ENCODE measurements at regions of chr16 and their contacts with region 1.

Region 1: GRCh38 chr16:69166221-69166833 is 20.6 kb upstream of the SNTB2 start:
- DNase-seq: no peak
- ATAC-seq: peak; percentile 38; the same call in 2 of the 3 replicates
- H3K4me3 ChIP-seq: no peak overlapping the region
- H3K27ac ChIP-seq: no peak overlapping the region
- H3K4me1 ChIP-seq: peaks cover 5% of the 10 kb centered on the region
- H3K27me3 ChIP-seq: no peaks in the 10 kb centered on the region
- CTCF ChIP-seq: no peak
- EP300 ChIP-seq: no peak
- POLR2A ChIP-seq: no peak
- RAD21 ChIP-seq: no peak

Region 2: DNA sequence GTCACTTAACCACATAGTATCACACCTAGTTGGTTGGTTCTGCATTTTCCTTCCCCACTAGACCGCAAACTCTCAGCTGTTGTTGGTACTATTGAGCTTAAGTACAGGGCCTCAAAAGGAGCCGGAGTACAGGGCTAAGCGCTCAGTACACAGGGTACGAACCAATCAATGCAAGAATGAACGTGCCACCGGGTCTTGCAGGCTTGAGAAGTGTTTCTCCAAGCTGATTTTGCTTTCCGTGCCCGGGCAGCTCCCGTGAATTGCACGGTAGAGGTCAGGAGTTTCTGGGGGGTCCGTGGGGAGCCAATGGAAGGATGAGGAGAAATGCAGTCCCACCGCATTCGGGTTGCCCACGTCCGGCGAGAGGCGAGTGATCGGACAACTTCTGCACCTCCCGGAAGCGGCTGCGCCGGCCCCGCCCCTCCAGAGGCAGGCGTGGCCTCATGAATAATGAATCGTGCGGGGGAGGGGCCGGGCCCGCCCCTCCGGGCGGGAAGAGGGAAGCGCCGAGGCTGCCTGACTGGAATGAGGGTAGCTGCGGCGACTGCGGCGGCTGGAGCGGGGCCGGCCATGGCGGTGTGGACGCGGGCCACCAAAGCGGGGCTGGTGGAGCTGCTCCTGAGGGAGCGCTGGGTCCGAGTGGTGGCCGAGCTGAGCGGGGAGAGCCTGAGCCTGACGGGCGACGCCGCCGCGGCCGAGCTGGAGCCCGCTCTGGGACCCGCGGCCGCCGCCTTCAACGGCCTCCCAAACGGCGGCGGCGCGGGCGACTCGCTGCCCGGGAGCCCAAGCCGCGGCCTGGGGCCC is 20.5 kb after region 1 on chr16 and contains the start of gene SNTB2:
- CTCF ChIA-PET with region 1: interaction called, 4 read pairs
- POLR2A ChIA-PET with region 1: interaction called, 13 read pairs
- RAD21 ChIA-PET with region 1: interaction called, 4 read pairs
- SMC1A ChIA-PET with region 1: interaction called, 8 read pairs
- in situ Hi-C with region 1: no loop called
- intact Hi-C with region 1: no loop called
- DNase-seq: peak; percentile 95
- ATAC-seq: peak; percentile 92
- H3K4me3 ChIP-seq: peak within 1 kb of the TSS; percentile 88
- H3K27ac ChIP-seq: peak within 1 kb of the TSS; percentile 90
- H3K4me1 ChIP-seq: peaks cover 22% of the 10 kb centered on the region
- H3K27me3 ChIP-seq: no peaks in the 10 kb centered on the region
- CTCF ChIP-seq: no peak
- EP300 ChIP-seq: peak; percentile 89 to 96
- POLR2A ChIP-seq: peak; percentile 77
- RAD21 ChIP-seq: no peak
- polyA plus RNA-seq, gene SNTB2: 1.2 to 1.4 TPM

Region 3: DNA sequence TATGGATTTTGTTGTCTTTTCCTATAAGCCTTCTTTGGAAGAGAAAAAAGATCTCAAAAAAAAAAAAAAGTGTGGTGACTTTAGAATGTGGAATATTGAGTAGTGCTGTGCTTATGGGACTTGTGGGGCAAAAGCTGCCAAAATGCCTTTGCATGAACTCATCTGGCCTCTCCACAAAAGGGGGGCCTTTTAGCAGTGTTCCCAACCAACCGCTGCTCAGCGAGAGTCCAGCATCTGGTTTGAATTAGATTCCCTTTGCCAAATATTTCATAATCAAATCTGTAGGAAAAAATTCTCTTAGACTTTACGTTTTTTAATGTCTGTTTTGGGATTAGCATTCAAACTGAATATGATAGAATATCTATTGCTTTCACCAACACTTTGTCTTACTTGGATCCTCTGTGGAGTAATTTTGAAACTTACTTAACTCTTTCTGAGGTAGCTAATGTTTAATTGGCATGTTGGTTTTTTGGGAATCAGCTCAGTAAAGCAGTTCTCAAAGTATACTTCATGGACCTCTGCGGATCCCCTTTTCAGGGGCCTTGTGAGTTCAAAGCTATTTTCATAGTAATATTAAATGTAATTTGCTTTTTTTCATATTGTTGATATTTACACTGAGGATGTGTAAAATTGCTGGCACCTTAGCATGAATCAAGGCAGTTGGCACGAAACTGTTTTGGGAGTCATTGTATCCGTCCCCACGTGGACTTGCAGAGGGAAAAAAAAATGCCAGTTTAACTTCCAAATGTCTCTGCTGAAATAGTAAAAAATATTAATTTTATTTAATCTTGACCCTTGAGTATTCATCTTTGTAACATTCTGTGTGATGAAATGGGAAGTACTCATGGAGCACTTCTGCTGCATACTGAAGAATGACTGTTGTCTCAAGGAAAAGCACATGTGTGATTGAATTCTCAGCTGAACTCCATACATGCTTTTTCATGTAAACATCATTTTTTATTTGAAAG is 110.1 kb after region 1 on chr16:
- CTCF ChIA-PET with region 1: no interaction called
- POLR2A ChIA-PET with region 1: no interaction called
- RAD21 ChIA-PET with region 1: no interaction called
- SMC1A ChIA-PET with region 1: no interaction called
- in situ Hi-C with region 1: no loop called
- intact Hi-C with region 1: no loop called
- DNase-seq: no peak
- ATAC-seq: no peak
- H3K4me3 ChIP-seq: no peak overlapping the region
- H3K27ac ChIP-seq: no peak overlapping the region
- H3K4me1 ChIP-seq: no peaks in the 10 kb centered on the region
- H3K27me3 ChIP-seq: no peaks in the 10 kb centered on the region
- CTCF ChIP-seq: no peak
- EP300 ChIP-seq: no peak
- POLR2A ChIP-seq: no peak
- RAD21 ChIP-seq: no peak

Measured in GM12878 (cell line).